Gastrocnemius medialis (tissue), 4 donors: ENCODE measurements at regions of chr17 and their contacts with region 1.

Region 1: DNA sequence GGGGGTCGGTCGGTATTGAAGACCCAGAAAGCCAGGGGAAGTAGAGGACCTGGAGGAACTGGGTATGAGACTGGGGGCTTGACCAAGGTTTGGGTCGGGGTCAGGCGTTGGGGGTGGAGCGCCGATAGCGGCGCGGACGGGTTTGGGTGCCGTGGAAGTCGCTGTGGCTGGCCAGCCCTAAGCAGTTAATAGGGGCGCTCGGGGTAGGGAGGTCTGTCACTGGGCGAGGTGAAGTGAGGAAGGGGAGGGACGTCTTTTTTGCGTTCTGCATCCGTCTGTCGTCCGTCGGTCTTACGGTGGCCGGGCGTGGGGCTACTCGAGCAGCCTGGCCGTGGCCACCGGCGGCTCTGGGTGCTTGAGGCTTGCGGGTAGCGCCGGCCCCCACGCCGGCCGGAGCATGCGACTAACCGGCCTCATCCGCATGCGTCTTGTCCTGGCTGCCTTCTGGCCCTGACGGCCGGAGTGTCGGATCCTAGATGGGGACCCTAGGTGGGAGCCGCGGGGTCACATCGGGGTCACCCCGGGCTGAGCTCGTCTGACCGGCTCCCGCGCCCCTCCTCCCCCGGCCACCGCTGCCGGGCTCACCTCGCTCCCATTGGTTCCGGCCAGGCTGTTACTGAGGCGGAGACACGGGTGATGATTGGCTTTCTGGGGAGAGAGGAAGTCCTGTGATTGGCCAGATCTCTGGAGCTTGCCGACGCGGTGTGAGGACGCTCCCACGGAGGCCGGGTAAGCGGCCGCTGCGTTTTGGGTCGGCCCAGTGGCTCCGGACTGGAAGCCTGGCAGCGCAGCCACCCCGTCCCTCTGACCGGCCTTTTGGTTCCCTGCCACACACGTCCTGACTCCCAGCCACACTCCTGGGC is 10.3 kb upstream of the TMEM88 start:
- DNase-seq: peak; percentile 93 to 95
- ATAC-seq: peak; percentile 70 to 73
- H3K4me3 ChIP-seq: peak overlapping the region; percentile 80 to 96 (median 88)
- H3K27ac ChIP-seq: peak overlapping the region; percentile 97 to 100 (median 100)
- H3K4me1 ChIP-seq: peaks cover 28 to 32% of the 10 kb centered on the region in 2 donors
- H3K27me3 ChIP-seq: no peaks in the 10 kb centered on the region
- CTCF ChIP-seq: no peak
- POLR2A ChIP-seq: peak; percentile 97

Region 2: GRCh38 chr17:7239091-7240027 is 605.2 kb before region 1 on chr17 and contains the start of gene PHF23:
- in situ Hi-C with region 1: no loop called
- intact Hi-C with region 1: loop called (anchors 5 kb)
- DNase-seq: peak; percentile 100
- ATAC-seq: peak; percentile 67 to 75
- H3K4me3 ChIP-seq: peak within 1 kb of the TSS; percentile 78 to 100 (median 98)
- H3K27ac ChIP-seq: peak within 1 kb of the TSS; percentile 92 to 99 (median 98)
- H3K4me1 ChIP-seq: peaks cover 34 to 41% of the 10 kb centered on the region in 2 donors
- H3K27me3 ChIP-seq: no peaks in the 10 kb centered on the region
- CTCF ChIP-seq: peak in 2 of 5 experiments; percentile 24 to 59
- POLR2A ChIP-seq: peak; percentile 92 to 93
- total RNA-seq, gene PHF23: 16.9 to 31.8 (median 24.1) TPM

Region 3: DNA sequence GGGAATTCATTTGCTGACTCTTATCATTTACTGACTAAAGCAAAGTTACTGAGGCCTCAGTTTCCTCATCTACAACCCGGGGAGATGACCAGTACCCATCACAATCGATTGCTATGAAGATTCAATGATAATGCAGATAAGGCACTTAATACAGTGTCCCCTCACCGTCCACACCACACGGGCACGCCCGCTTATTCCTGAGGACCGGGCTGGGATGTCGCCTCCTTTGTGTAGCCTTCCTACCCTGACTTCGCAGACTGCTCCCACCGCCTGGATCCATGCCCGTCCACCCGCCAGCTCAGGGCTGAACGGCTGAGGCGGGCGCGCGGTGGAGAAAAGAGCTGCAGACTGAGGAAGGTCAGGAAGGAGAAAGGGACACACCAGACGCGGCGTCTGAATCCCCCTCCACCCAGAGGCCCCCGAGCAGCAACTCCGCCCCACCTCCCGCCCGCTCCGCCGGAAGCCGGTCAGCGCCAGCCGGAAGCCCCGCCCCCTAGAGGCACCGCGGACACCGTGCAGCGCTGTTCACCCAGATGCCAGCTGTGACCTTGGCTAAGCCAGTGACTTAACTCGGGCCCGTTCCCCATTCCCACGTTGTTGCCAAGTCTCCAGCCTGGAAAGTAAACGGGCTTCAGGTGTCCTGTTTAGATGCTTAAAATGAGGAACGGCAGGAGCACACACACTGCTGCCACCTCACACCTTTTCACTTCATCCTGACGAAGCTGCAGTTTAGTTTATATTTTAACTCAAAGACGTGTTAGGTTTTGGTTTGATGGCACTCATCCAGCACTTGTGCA is 531.9 kb after region 1 on chr17 and contains the start of gene KRABD2:
- in situ Hi-C with region 1: no loop called
- intact Hi-C with region 1: loop called (anchors 5 kb)
- DNase-seq: peak; percentile 84 to 92
- ATAC-seq: peak; percentile 92 to 95
- H3K4me3 ChIP-seq: peak within 1 kb of the TSS; percentile 72 to 95 (median 84)
- H3K27ac ChIP-seq: peak within 1 kb of the TSS; percentile 90 to 93 (median 92)
- H3K4me1 ChIP-seq: peaks cover 35 to 46% of the 10 kb centered on the region in 2 donors
- H3K27me3 ChIP-seq: no peaks in the 10 kb centered on the region
- CTCF ChIP-seq: peak; percentile 18 to 80 (median 70)
- POLR2A ChIP-seq: peak; percentile 74